ENCODE measurements at regions of chr6 and their contacts with region 1.

Region 1: GRCh38 chr6:37018198-37019064 is 13.0 kb downstream of the FGD2 start:
- DNase-seq: peak; percentile 95
- ATAC-seq: peak; percentile 90
- H3K4me3 Mint-ChIP-seq: no peak overlapping the region
- H3K27ac Mint-ChIP-seq: no peak overlapping the region; the same call in 1 of the 2 replicates
- H3K4me1 Mint-ChIP-seq: peaks cover 25% of the 10 kb centered on the region
- H3K27me3 Mint-ChIP-seq: no peaks in the 10 kb centered on the region
- CTCF ChIP-seq: peak; percentile 78

Region 2: GRCh38 chr6:36885461-36886401 is 132.7 kb before region 1 on chr6 and contains the start of gene C6orf89:
- CTCF ChIA-PET with region 1: interaction called, 55 read pairs
- POLR2A ChIA-PET with region 1: no interaction called
- DNase-seq: peak; percentile 95
- ATAC-seq: peak; percentile 99
- H3K4me3 Mint-ChIP-seq: peak within 1 kb of the TSS; percentile 91
- H3K27ac Mint-ChIP-seq: peak within 1 kb of the TSS; percentile 96
- H3K4me1 Mint-ChIP-seq: peaks cover 17% of the 10 kb centered on the region
- H3K27me3 Mint-ChIP-seq: no peaks in the 10 kb centered on the region
- CTCF ChIP-seq: peak; percentile 64
- total RNA-seq, gene C6orf89: 13.2 to 15.6 TPM (median 15.0 TPM) in 3 replicates

Region 3: DNA sequence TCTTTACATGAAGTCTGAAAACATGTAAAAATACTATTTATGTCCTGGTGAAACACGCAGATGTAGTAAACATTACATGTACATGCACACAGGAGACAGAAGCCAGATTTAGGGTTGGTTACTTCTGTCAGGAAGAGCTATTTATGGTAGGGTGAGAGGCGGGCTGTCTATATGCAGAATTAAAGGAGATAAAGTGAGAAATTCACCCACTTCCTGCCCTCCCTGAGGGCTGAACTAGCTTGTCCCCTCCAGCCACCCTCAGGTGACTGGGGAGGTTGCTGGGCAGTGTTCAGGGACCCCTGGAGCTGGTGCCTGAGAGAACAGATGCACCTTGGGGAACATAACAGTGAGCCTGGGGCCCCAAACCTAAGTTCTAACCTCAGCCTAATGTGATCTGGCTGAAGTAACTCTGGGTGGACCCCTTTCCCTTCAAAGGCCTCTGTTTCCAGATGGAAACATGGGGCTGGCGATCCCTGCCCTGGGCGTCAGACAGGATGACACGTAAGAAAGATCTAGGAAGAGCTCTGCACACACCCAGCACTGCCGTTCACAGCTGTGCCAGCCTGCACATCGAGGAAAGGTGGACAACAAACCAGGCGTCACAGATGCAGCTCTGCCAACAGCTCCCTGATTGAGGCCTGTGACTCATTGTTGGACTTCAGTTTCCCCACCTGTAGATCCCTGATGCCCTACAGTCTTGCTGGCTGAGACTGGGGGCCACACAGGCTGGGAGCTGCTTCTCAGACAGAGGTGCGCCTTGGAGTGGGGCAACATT is 62.6 kb before region 1 on chr6:
- CTCF ChIA-PET with region 1: interaction called, 11 read pairs
- POLR2A ChIA-PET with region 1: no interaction called
- DNase-seq: peak; percentile 8
- ATAC-seq: no peak
- H3K4me3 Mint-ChIP-seq: no peak overlapping the region
- H3K27ac Mint-ChIP-seq: no peak overlapping the region; the same call in 1 of the 2 replicates
- H3K4me1 Mint-ChIP-seq: peaks cover 9% of the 10 kb centered on the region
- H3K27me3 Mint-ChIP-seq: no peaks in the 10 kb centered on the region
- CTCF ChIP-seq: no peak

Region 4: DNA sequence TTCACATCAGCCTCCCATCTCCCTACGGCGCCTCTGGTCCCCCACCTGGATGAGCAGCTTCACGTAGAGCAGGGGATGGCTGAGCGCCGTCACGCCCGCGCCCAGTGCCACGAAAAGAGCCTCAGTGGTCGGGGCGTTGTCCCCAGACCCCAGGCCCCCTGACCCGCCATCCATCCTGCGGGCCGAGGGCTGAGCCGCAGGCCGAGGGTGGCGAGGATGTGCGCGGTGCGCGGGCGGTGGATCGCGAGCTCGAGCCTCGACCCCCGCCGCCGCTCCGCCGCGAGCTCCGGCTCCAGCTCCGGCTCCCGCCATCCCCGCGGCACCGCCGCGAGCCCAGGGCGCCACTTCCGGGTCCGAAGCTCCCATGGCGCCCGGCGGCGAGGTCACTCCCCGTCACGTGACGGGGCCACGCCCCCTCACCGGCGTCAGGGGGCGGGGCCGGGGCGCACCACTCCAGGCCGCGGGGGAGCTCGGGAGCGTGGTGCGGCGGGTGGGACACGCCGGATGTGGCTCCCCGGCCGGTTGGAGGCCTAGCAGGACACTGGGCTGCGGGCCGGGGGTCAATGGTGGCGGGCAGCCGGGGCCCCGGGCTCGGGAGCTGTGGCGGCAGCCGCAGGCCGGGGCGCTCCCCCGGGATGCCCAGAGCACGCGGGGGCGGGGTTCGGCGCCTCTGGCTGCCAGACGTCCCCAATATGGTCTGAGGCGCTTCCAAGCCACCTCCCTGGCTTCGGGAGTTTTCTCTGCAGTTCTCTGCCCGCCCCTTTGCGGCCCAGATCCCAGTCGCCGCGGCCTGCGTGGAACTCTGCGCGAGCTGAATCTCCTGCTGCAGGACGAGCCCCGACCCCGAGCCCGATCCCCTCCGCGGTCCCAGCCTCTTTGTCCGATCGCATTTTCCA is 32.4 kb before region 1 on chr6 and contains the start of gene MTCH1:
- CTCF ChIA-PET with region 1: interaction called, 63 read pairs
- POLR2A ChIA-PET with region 1: interaction called, 7 read pairs
- DNase-seq: peak; percentile 80
- ATAC-seq: peak; percentile 78
- H3K4me3 Mint-ChIP-seq: peak within 1 kb of the TSS; percentile 98
- H3K27ac Mint-ChIP-seq: peak within 1 kb of the TSS; percentile 95
- H3K4me1 Mint-ChIP-seq: peaks cover 20% of the 10 kb centered on the region
- H3K27me3 Mint-ChIP-seq: no peaks in the 10 kb centered on the region
- CTCF ChIP-seq: no peak
- total RNA-seq, gene MTCH1: 198 to 207 TPM (median 204 TPM) in 3 replicates

Region 5: DNA sequence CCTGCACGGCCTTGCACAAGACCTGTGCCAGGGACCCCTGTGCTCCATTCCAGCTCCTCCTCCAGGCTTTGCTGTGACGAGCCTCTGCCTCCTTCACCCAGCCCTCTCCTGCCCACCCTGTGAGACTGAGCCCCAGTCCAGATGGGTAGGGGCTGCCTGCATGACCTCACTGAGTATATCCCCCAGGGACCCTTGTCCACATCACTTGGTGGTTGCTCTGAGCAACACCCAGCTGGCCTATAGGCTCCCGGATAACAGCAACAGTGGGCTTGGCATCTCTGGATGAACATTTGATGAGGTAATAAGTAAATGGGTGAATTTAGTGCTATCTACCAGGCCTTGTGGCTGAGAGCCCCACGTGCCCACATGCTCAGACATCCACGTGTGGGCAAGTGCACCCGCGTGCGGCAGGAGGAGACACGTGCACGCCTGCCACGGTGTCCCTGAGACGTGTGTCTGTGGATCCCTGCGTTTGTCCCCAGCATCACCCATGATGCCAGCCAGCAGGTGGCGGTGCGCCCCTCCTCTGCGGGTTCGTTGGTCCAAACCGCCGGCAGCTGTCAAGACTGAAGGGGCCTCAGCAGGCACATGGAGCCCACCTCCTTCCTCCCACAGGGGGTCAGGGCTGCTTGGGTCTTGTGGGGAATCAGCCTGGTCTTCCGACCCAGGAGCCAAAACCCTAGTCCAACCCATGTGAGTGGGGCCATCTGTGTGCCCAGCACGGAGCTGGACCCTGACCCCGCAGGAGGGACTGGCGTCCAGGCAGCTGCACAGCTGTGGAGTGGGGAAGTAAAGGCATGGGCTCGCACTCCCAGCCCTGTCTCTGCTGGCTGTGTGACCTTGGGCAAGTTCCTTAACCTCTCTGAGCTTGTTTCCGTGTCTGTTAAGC is 33.0 kb after region 1 on chr6:
- CTCF ChIA-PET with region 1: interaction called, 51 read pairs
- POLR2A ChIA-PET with region 1: no interaction called
- DNase-seq: peak; percentile 94
- ATAC-seq: peak; percentile 38
- H3K4me3 Mint-ChIP-seq: peak overlapping the region; percentile 25
- H3K27ac Mint-ChIP-seq: peak overlapping the region; percentile 82
- H3K4me1 Mint-ChIP-seq: peaks cover 37% of the 10 kb centered on the region
- H3K27me3 Mint-ChIP-seq: no peaks in the 10 kb centered on the region
- CTCF ChIP-seq: peak; percentile 71

Region 6: GRCh38 chr6:37324131-37325033 is 306.0 kb after region 1 on chr6:
- CTCF ChIA-PET with region 1: interaction called, 10 read pairs
- POLR2A ChIA-PET with region 1: no interaction called
- DNase-seq: no peak
- ATAC-seq: no peak
- H3K4me3 Mint-ChIP-seq: no peak overlapping the region
- H3K27ac Mint-ChIP-seq: no peak overlapping the region
- H3K4me1 Mint-ChIP-seq: peaks cover 2% of the 10 kb centered on the region; the same call in 1 of the 2 replicates
- H3K27me3 Mint-ChIP-seq: no peaks in the 10 kb centered on the region
- CTCF ChIP-seq: no peak